HAP-1 (cell line): ENCODE measurements at regions of chr9 and their contacts with region 1.

Region 1: DNA sequence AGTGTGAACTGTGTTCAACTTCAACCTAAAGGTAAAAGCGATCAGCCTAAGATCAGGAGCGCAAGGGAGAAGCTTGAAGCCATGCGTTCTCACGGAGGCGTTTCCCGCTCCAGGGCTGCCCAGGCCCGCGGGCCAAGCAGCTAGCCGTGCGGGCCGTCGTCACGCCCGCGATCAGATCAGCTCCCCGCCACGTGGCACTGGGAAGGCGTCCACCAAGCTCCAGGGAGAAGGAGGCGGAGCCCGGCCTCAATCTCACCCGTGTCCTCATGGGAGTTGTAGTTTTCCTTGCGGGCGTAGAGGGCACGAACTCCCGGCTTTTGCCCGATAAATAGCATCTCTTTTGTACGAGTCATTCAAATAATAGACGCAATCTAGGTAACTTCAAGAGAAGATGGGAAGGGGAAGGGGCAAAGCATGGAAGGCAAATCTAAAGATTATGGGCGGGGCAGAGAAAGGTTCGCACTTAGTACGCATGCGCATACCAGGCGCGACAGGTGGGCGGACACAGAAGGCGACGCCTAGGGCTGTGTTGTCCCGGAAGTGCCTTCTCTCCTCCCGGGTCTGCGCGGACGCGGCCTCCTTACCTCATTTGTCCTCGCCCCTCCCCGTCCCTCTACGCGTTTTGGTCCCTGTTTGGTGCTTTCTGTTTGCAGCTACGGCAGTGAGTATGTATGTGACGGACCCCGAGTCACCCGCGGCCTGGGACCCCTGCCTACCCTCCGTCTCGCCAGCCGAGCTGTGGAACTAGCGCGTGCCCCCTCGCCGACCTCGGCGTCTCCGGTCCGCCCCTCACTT is 40.8 kb upstream of the ZCCHC7 start:
- DNase-seq: peak; percentile 92 to 95
- H3K4me3 ChIP-seq: peak overlapping the region; percentile 84
- H3K4me1 ChIP-seq: peaks cover 24% of the 10 kb centered on the region
- H3K27me3 ChIP-seq: 0 out of 2 replicates have a peak, but pooled peaks cover 3% of the 10 kb centered on the region

Region 2: DNA sequence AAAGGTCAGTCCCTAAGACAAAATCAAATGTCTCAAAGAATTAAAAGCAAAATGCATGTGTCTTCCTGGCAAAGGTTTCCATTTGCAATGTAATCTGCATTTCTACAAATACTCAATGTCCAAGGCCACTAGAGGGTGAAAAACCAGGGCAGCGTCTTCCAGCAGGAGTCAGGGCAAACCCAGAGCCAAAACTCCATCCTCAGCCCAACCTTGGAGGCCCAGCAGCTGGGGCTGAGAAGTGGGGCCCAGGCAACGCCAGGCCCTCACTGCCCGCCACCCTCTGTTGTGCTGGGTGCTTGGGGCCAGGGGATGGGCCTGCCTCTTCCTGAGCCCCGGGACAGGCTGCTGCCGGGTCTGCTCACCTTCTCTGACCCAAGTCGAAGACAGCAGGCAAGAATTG is 245.6 kb before region 1 on chr9:
- in situ Hi-C with region 1: no loop called
- DNase-seq: no peak
- H3K4me3 ChIP-seq: no peak overlapping the region
- H3K4me1 ChIP-seq: no peaks in the 10 kb centered on the region
- H3K27me3 ChIP-seq: no peaks in the 10 kb centered on the region

Region 3: DNA sequence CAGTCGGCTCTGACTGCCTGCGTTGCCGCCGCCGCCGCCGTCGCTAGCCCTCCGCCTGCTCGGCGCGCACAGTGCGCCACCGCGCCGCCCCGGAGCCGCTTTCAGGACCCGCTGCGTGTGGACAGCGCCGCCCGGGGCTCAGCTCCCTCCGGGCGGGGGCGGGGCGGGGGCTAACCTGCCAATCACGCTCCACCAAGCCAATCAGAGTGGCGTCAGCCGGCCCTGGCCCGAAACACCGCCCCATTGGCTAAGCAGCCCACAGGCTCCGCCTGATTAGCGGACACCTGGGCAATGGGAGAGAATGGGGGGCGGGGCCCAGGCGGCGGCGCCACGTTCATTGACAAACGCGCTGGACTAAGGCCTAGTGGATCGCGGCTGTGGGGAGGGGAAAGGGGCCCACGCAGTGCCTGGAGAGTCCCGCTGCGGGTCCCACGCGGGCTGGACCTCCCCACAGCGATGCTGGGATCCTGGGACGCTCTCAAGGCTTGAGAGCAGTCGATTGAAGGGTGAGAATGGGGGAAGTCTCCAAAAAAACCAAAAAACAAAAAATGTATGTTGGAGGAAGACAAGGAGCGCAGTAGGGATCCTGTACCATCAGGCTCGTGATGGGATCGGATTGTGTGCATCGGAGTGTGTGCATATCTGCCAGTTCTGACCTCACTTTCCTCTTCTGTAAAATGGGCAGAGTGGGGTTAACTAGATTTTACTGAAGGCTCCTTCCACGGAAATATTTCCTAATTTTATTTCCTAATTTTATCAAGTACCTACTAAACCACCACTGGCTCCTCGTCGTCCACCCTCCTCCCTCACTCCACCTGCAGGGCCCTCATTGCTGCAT is 51.8 kb before region 1 on chr9:
- in situ Hi-C with region 1: loop called (anchors 10 kb)
- DNase-seq: peak; percentile 95 to 99
- H3K4me3 ChIP-seq: peak overlapping the region; percentile 19
- H3K4me1 ChIP-seq: peaks cover 3% of the 10 kb centered on the region
- H3K27me3 ChIP-seq: peaks cover 48% of the 10 kb centered on the region

Region 4: GRCh38 chr9:37350486-37351190 is 271.1 kb after region 1 on chr9:
- in situ Hi-C with region 1: no loop called
- DNase-seq: no peak
- H3K4me3 ChIP-seq: no peak overlapping the region
- H3K4me1 ChIP-seq: no peaks in the 10 kb centered on the region
- H3K27me3 ChIP-seq: no peaks in the 10 kb centered on the region